Activated T-helper 2 cell treated with anti-CD3 and anti-CD28 coated beads, Interferon-gamma antibody, Interleukin-2, Interleukin-4, amounts not matched to agents 10 μg/mL and 5 μg/mL and 100 μg/mL, durations not matched to agents 14 hours and 24 hours and 36 hours (primary cell): ENCODE measurements at regions of chr14 and their contacts with region 1.

Region 1: DNA sequence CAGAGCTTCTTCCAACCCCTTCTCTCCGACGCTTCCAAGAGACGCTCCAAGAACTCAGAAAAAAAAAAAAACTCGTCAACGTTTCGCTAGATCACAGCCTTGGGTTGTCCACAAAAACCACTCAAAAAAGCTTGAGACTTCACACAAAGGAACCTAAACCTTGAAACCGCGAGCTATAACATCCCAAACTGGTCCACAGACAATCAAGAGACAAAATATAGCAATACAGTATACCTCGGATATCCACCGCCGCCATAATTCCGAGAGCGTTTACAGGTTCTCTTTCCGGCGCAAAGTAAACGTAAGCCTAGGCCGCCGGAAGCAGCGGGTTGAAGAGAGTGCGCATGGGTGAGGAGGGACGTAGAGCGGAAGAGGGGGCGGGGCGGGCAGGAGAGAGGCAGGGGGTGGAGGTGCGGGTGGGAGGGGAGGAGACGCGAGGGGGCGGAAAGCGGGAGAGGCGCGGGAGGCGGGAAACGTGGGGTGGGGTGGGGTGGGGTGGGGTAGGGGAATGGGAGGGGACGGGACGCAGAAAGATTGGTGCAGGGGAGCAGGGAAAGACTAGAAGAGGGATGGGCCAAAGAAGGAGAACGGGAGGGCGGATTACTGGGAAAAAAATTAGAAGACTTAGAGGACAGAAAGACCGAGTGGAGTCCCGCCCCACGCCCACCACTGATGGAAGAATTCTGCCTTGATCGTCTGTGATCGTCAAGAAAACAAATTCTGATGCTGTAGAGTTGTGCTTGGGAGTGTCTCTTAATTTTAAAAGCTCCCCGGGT is at the start of gene MED6:
- DNase-seq: peak; percentile 88
- H3K4me3 Mint-ChIP-seq: peak within 1 kb of the TSS; percentile 99
- H3K27ac Mint-ChIP-seq: peak within 1 kb of the TSS; percentile 95
- H3K4me1 Mint-ChIP-seq: peaks cover 23% of the 10 kb centered on the region
- H3K27me3 Mint-ChIP-seq: peaks cover 10% of the 10 kb centered on the region
- total RNA-seq, gene MED6: 52.2 and 58.2 TPM in 2 replicates

Region 2: DNA sequence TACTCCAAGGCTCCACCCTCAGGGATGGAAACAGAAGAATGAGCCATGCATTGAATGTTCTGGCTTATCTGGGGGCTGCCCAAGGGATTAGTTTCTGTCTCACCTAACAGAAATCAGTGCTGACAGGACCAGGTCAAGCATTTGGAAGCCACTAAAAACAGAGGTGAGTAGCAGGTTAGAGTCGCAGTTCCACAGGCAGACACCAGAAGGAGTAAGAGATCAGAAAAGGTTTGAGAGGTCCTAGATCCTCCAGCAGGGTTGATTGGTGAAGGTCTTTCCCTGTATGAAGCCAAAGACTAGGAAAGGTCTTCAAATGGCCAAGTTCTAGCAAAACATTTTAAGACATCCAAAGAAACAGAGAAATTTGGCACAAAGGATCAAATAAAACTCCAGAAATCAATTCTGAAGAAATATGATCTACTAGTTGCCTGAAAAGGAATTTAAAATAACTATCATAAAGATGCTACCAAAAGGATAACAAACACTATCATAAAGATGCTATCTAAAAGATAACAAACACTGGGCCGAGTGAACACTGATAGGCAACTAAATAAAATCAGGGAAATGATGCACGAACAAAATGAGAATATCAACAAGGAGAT is 21.6 kb after region 1 on chr14:
- intact Hi-C with region 1: no loop called
- DNase-seq: peak; percentile 27
- H3K4me3 Mint-ChIP-seq: no peak overlapping the region
- H3K27ac Mint-ChIP-seq: no peak overlapping the region
- H3K4me1 Mint-ChIP-seq: peaks cover 2% of the 10 kb centered on the region
- H3K27me3 Mint-ChIP-seq: peaks cover 23% of the 10 kb centered on the region

Region 3: DNA sequence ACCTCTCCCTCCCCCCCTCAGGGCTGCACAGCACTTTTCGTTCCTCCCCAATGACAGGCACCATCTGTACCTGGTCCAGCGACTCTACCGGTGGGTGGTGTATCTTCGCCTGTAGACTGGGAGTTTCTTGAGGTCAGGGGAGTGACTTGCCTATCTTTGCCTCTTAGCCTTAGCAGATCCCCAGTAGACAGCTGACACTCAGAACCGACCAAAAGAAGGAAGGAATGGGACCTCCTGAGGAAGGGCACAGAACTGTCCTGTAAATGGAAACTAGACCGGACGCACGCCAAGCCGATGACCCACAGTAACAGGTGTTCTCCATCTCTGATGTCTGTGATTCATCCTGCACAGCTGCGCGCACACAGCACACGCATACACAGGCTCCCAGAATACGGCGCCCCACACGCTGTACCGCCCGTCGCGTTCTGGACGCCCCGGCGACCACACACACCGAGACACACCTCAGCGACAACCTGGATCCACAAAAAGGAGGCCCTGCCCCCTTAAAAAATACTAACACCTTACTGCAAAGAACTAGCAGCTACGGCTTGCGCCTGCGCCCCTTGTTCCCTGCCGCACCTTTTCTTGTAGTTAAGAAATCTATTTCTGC is 40.5 kb after region 1 on chr14:
- intact Hi-C with region 1: loop called (anchors 2 kb)
- DNase-seq: peak; percentile 36
- H3K4me3 Mint-ChIP-seq: peak overlapping the region; percentile 87
- H3K27ac Mint-ChIP-seq: peak overlapping the region; percentile 76
- H3K4me1 Mint-ChIP-seq: peaks cover 49% of the 10 kb centered on the region
- H3K27me3 Mint-ChIP-seq: peaks cover 3% of the 10 kb centered on the region

Region 4: DNA sequence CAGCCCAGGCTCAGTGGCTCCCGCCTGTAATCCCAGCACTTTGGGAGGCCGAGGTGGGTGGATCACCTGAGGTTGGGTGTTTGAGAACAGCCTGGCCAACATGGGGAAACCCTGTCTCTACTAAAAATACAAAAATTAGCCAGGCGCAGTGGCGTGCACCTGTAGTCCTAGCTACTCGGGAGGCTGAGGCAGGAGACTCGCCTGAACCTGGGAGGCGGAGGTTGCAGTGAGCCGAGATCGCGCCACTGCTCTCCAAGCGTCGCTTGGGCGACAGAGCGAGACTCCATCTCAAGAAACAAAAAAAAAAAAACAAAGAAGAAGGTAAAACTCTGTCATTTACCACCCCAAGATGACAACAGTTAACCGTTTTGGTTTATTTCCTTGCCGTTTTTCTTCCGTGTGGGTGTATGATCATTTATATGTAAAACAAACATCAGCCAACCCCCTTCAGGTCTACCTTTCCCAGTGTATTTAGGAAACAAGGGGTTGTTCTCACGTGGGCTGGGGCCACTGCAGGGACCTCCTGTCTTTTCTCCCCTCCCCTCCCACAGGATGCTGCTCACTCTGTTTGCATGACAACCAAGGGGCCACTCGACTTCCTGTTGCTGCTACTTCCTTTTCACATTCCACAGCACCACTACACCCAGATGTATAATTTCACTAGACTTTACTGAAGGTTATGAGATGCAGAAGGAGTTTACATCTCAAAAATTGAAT is 54.7 kb after region 1 on chr14:
- intact Hi-C with region 1: loop called (anchors 2 kb)
- DNase-seq: peak; percentile 77
- H3K4me3 Mint-ChIP-seq: peak overlapping the region; percentile 81
- H3K27ac Mint-ChIP-seq: peak overlapping the region; percentile 99
- H3K4me1 Mint-ChIP-seq: peaks cover 74% of the 10 kb centered on the region
- H3K27me3 Mint-ChIP-seq: no peaks in the 10 kb centered on the region

Region 5: GRCh38 chr14:70665191-70665916 is 64.8 kb after region 1 on chr14:
- intact Hi-C with region 1: no loop called
- DNase-seq: no peak
- H3K4me3 Mint-ChIP-seq: no peak overlapping the region
- H3K27ac Mint-ChIP-seq: no peak overlapping the region
- H3K4me1 Mint-ChIP-seq: peaks cover 43% of the 10 kb centered on the region
- H3K27me3 Mint-ChIP-seq: no peaks in the 10 kb centered on the region

Region 6: DNA sequence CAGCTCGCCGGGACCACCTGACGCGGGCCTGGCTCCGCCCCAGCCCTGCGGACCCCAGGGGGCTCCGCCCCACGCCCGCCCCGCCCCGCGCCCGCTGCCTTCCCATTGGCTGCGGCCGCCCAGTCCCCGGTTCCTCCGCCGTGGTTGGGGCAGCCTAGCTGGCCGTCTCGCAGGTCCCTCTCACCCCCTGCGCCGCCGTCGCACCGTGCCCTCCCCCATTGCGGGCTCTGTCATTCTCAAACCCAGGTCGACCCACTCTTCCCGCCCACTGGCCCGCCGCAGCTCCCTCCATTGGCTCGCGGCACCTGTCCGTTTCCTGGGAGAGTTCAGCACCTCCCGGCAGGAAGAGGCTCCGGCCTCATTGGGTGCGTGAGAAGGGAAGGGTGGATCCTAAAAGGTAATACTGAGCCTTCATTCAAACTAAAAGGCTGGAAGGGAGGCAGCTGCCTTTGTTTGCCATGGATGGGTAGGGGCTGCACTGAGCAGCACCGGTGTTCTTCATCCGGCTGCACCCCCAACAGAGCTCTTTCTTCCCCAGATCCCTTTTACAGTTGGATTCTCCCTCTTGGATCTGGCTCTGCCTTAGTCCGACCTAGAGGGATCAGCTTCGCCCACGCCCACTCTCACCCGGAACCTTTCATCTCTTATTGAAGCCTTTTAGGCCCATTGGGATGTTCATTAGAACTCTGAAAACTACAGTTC is 209.1 kb after region 1 on chr14:
- intact Hi-C with region 1: loop called (anchors 5 kb)
- DNase-seq: peak; percentile 91
- H3K4me3 Mint-ChIP-seq: no peak overlapping the region
- H3K27ac Mint-ChIP-seq: peak overlapping the region; percentile 64
- H3K4me1 Mint-ChIP-seq: peaks cover 10% of the 10 kb centered on the region
- H3K27me3 Mint-ChIP-seq: peaks cover 2% of the 10 kb centered on the region

Region 7: GRCh38 chr14:70972107-70972976 is 371.8 kb after region 1 on chr14:
- intact Hi-C with region 1: loop called (anchors 10 kb)
- DNase-seq: peak; percentile 67
- H3K4me3 Mint-ChIP-seq: no peak overlapping the region
- H3K27ac Mint-ChIP-seq: peak overlapping the region; percentile 19
- H3K4me1 Mint-ChIP-seq: peaks cover 21% of the 10 kb centered on the region
- H3K27me3 Mint-ChIP-seq: no peaks in the 10 kb centered on the region